ENCODE measurements at regions of chr9 and their contacts with region 1.

Region 1: DNA sequence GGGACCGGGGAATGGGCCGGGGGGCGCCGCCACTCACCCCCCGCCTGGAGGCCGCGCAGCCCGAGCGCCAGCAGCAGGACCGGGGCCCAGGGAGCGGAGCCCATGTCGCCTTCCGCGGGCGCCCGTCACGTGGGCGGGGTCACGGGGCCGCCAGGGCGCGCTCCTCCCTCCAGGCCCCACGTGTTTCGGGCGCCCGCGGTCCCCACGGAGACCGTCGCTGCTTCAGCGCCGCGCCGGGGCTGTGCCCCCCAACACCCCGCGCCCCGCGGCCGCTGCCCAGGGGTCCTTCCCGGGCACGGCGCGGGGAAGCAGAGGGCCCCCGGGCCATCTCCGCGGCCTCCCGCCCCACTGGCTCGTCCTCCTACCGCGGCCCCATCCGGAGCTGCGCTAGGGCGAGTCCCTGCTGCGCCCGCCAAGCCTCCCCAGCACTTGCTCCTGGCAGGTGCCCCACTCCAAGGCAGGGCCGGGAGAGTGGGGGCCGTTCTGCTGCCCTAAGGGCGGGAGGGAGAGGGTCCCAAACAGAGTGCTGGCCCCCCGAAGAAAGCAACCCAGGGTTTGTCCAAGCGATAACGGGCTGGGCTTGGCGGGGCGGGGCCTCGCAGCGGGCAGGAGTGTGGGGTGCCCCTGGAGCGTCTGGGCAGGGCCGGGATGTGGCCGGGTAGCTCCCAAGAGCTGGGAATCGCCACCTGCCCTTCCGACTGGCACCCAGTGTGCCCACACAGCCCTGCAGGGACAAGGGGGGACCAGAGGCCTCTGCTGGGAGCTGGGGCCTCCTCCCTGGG is at the start of gene DPP7:
- DNase-seq: peak; percentile 76
- H3K4me3 Mint-ChIP-seq: peak within 1 kb of the TSS; percentile 82
- H3K27ac Mint-ChIP-seq: peak within 1 kb of the TSS; percentile 52
- H3K4me1 Mint-ChIP-seq: peaks cover 11% of the 10 kb centered on the region
- H3K27me3 Mint-ChIP-seq: no peaks in the 10 kb centered on the region
- total RNA-seq, gene DPP7: 371 and 394 TPM in 2 replicates

Region 2: GRCh38 chr9:137070201-137070905 is 44.4 kb before region 1 on chr9 and contains the start of gene SAPCD2:
- intact Hi-C with region 1: loop called (anchors 1 kb)
- DNase-seq: peak; percentile 85
- H3K4me3 Mint-ChIP-seq: peak within 1 kb of the TSS; percentile 86
- H3K27ac Mint-ChIP-seq: peak within 1 kb of the TSS; percentile 91
- H3K4me1 Mint-ChIP-seq: peaks cover 16% of the 10 kb centered on the region
- H3K27me3 Mint-ChIP-seq: peaks cover 3% of the 10 kb centered on the region
- total RNA-seq, gene SAPCD2: 23.9 and 25.1 TPM in 2 replicates

Region 3: GRCh38 chr9:137095664-137096517 is 18.9 kb before region 1 on chr9:
- intact Hi-C with region 1: loop called (anchors 1 kb)
- DNase-seq: peak; percentile 83
- H3K4me3 Mint-ChIP-seq: peak overlapping the region; percentile 72
- H3K27ac Mint-ChIP-seq: peak overlapping the region; percentile 93
- H3K4me1 Mint-ChIP-seq: peaks cover 23% of the 10 kb centered on the region
- H3K27me3 Mint-ChIP-seq: no peaks in the 10 kb centered on the region

Region 4: GRCh38 chr9:137129456-137130175 is 14.8 kb after region 1 on chr9:
- intact Hi-C with region 1: loop called (anchors 2 kb)
- DNase-seq: peak; percentile 91
- H3K4me3 Mint-ChIP-seq: peak overlapping the region; percentile 90
- H3K27ac Mint-ChIP-seq: peak overlapping the region; percentile 79
- H3K4me1 Mint-ChIP-seq: peaks cover 24% of the 10 kb centered on the region
- H3K27me3 Mint-ChIP-seq: peaks cover 5% of the 10 kb centered on the region

Measured in activated T-helper 1 cell treated with anti-CD3 and anti-CD28 coated beads, Interleukin-12 subunit alpha, Interleukin-12 subunit beta, Interleukin-2, Interleukin-4 antibody, amounts not matched to agents 30 ng/mL and 10 ng/mL and 1 ng/mL, durations not matched to agents 14 hours and 24 hours and 36 hours (primary cell).